PC-3 (cell line): ENCODE measurements at regions of chr10 and their contacts with region 1.

Region 1: GRCh38 chr10:34815185-34816084 is at the start of gene PARD3:
- DNase-seq: peak; percentile 91
- ATAC-seq: peak; percentile 64
- H3K4me3 ChIP-seq: peak within 1 kb of the TSS; percentile 72
- H3K27ac ChIP-seq: peak within 1 kb of the TSS; percentile 13; the same call in 1 of the 2 replicates
- H3K4me1 ChIP-seq: peaks cover 36% of the 10 kb centered on the region
- H3K27me3 ChIP-seq: no peaks in the 10 kb centered on the region
- CTCF ChIP-seq: no peak
- total RNA-seq, gene PARD3: 149 and 154 TPM in 2 replicates

Region 2: DNA sequence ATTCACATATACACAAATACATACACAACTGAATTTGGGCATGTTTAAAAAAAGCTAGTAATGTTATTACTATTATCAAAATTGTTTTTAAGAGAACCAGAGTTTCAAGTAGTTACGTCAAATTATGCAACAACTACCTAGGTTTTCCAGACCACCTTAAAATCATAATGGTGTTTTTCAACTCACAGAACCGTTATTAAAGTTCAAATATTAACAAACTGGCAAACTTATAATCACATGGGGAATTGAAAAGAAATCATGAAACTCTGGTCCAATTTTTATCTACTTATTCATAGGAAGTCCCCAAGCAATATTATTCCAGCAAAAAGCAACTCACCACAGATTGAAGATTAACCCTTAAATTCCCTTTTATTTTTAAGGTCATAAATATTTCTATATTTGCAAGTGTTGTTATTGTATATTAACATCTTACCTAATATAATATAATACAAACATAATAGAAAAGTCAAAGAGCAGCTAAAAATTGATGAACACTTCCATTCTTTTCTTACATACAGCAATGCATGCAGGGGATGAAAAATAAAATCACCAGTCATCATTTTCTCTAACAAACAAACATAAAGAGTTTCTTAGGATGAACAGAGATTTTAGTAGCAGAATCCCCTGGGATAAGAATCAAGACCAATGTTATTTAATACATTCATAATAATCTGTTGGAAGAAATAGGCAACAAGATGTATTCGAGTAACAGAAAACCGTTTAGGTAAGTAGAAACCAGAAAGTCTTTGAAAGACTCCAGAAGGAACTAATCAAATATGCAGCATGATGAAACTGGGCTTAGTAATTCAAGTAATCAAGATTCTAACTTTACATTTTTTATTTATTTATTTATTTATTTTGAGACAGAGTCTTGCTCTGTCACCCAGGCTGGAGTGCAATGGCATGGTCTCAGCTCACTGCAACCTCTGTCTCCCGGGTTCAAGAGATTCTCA is 391.5 kb before region 1 on chr10:
- CTCF ChIA-PET with region 1: no interaction called
- POLR2A ChIA-PET with region 1: no interaction called
- intact Hi-C with region 1: no loop called
- DNase-seq: no peak
- ATAC-seq: no peak
- H3K4me3 ChIP-seq: no peak overlapping the region
- H3K27ac ChIP-seq: no peak overlapping the region
- H3K4me1 ChIP-seq: no peaks in the 10 kb centered on the region
- H3K27me3 ChIP-seq: no peaks in the 10 kb centered on the region
- CTCF ChIP-seq: no peak

Region 3: GRCh38 chr10:34454590-34455261 is 360.7 kb before region 1 on chr10:
- CTCF ChIA-PET with region 1: no interaction called
- POLR2A ChIA-PET with region 1: no interaction called
- intact Hi-C with region 1: no loop called
- DNase-seq: no peak
- ATAC-seq: no peak
- H3K4me3 ChIP-seq: no peak overlapping the region
- H3K27ac ChIP-seq: no peak overlapping the region
- H3K4me1 ChIP-seq: no peaks in the 10 kb centered on the region
- H3K27me3 ChIP-seq: no peaks in the 10 kb centered on the region
- CTCF ChIP-seq: no peak

Region 4: GRCh38 chr10:34732926-34733325 is 82.5 kb before region 1 on chr10:
- CTCF ChIA-PET with region 1: interaction called, 16 read pairs
- POLR2A ChIA-PET with region 1: interaction called, 4 read pairs
- intact Hi-C with region 1: no loop called
- DNase-seq: peak; percentile 93
- ATAC-seq: peak; percentile 25
- H3K4me3 ChIP-seq: peak overlapping the region; percentile 0; the same call in 1 of the 2 replicates
- H3K27ac ChIP-seq: peak overlapping the region; percentile 71
- H3K4me1 ChIP-seq: peaks cover 43% of the 10 kb centered on the region
- H3K27me3 ChIP-seq: no peaks in the 10 kb centered on the region
- CTCF ChIP-seq: peak; percentile 86

Region 5: GRCh38 chr10:34758447-34758996 is 56.9 kb before region 1 on chr10:
- CTCF ChIA-PET with region 1: interaction called, 3 read pairs
- POLR2A ChIA-PET with region 1: no interaction called
- intact Hi-C with region 1: loop called (anchors 2 kb)
- DNase-seq: peak; percentile 100
- ATAC-seq: peak; percentile 91
- H3K4me3 ChIP-seq: peak overlapping the region; percentile 35
- H3K27ac ChIP-seq: peak overlapping the region; percentile 81
- H3K4me1 ChIP-seq: peaks cover 52% of the 10 kb centered on the region
- H3K27me3 ChIP-seq: no peaks in the 10 kb centered on the region
- CTCF ChIP-seq: no peak

Region 6: GRCh38 chr10:34768261-34768971 is 47.0 kb before region 1 on chr10:
- CTCF ChIA-PET with region 1: interaction called, 10 read pairs
- POLR2A ChIA-PET with region 1: interaction called, 13 read pairs
- intact Hi-C with region 1: no loop called
- DNase-seq: peak; percentile 99
- ATAC-seq: peak; percentile 100
- H3K4me3 ChIP-seq: peak overlapping the region; percentile 41
- H3K27ac ChIP-seq: peak overlapping the region; percentile 67
- H3K4me1 ChIP-seq: peaks cover 18% of the 10 kb centered on the region
- H3K27me3 ChIP-seq: no peaks in the 10 kb centered on the region
- CTCF ChIP-seq: no peak

Region 7: GRCh38 chr10:34796133-34796532 is 19.3 kb before region 1 on chr10:
- CTCF ChIA-PET with region 1: no interaction called
- POLR2A ChIA-PET with region 1: no interaction called
- intact Hi-C with region 1: no loop called
- DNase-seq: no peak
- ATAC-seq: no peak
- H3K4me3 ChIP-seq: no peak overlapping the region
- H3K27ac ChIP-seq: no peak overlapping the region
- H3K4me1 ChIP-seq: no peaks in the 10 kb centered on the region
- H3K27me3 ChIP-seq: no peaks in the 10 kb centered on the region
- CTCF ChIP-seq: no peak

Region 8: DNA sequence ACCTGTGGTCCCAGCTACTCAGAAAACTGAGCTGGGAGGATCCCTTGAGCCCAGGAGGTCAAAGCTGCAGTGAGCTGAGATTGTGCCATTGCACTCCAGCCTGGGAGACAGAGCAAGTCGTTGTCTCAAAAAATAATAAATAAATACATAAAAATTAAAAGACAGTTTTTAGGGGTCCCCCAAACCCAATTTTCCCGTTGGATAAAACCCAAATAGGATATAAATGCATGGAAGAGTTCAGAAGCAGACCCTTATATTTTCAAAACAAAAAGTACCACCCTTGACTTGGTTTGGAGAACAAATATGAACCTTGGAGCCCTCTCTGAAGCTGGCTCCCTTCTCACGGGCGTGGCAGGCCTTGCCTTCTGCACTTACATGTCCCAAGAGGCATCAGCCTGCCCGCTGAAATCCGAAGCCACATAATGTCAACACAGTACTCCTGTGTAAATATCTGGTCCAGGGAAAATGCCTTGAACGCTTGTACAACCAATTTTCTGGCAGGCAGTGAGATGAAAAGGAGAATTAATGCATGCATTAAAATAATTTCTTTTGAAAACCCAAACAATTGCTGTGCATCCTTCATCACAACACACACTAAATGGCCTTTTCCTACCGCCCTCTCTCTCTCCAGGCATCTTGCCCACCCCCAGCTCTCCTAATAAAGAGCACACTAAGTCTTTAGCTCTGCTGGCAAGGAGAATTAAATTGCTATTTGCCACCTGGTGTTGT is 46.0 kb after region 1 on chr10:
- CTCF ChIA-PET with region 1: no interaction called
- POLR2A ChIA-PET with region 1: no interaction called
- intact Hi-C with region 1: loop called (anchors 2 kb)
- DNase-seq: peak; percentile 98
- ATAC-seq: peak; percentile 98
- H3K4me3 ChIP-seq: no peak overlapping the region; the same call in 1 of the 2 replicates
- H3K27ac ChIP-seq: peak overlapping the region; percentile 3; the same call in 1 of the 2 replicates
- H3K4me1 ChIP-seq: peaks cover 27% of the 10 kb centered on the region
- H3K27me3 ChIP-seq: no peaks in the 10 kb centered on the region
- CTCF ChIP-seq: no peak

Region 9: GRCh38 chr10:34960983-34961382 is 145.5 kb after region 1 on chr10:
- CTCF ChIA-PET with region 1: interaction called, 3 read pairs
- POLR2A ChIA-PET with region 1: no interaction called
- intact Hi-C with region 1: loop called (anchors 1 kb)
- DNase-seq: peak; percentile 66
- ATAC-seq: peak; percentile 83
- H3K4me3 ChIP-seq: no peak overlapping the region
- H3K27ac ChIP-seq: no peak overlapping the region
- H3K4me1 ChIP-seq: 0 out of 2 replicates have a peak, but pooled peaks cover 3% of the 10 kb centered on the region
- H3K27me3 ChIP-seq: no peaks in the 10 kb centered on the region
- CTCF ChIP-seq: peak; percentile 79

Region 10: DNA sequence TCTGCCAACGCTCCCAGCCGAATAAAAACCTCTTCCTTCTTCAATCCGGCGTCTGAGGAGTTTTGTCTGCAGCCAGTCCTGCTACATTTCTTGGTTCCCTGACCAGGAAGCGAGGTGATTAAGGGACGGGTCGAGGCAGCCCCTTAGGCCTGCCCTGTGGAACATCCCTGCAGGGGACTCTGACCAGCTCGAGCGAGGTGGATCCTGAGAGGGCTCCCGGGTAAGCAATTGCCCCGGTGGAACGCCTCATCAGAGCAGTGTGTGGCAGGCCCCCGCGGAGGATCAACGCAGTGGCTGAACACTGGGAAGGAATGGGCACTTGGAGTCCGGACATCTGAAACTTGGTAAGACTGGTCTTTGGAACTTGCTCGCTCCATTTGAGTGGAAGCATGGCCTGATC is 153.7 kb after region 1 on chr10:
- CTCF ChIA-PET with region 1: no interaction called
- POLR2A ChIA-PET with region 1: no interaction called
- intact Hi-C with region 1: loop called (anchors 1 kb)
- DNase-seq: no peak
- ATAC-seq: no peak
- H3K4me3 ChIP-seq: no peak overlapping the region
- H3K27ac ChIP-seq: no peak overlapping the region
- H3K4me1 ChIP-seq: peaks cover 23% of the 10 kb centered on the region
- H3K27me3 ChIP-seq: no peaks in the 10 kb centered on the region
- CTCF ChIP-seq: no peak